IMR-90 (cell line): ENCODE measurements at regions of chr1 and their contacts with region 1.

Region 1: DNA sequence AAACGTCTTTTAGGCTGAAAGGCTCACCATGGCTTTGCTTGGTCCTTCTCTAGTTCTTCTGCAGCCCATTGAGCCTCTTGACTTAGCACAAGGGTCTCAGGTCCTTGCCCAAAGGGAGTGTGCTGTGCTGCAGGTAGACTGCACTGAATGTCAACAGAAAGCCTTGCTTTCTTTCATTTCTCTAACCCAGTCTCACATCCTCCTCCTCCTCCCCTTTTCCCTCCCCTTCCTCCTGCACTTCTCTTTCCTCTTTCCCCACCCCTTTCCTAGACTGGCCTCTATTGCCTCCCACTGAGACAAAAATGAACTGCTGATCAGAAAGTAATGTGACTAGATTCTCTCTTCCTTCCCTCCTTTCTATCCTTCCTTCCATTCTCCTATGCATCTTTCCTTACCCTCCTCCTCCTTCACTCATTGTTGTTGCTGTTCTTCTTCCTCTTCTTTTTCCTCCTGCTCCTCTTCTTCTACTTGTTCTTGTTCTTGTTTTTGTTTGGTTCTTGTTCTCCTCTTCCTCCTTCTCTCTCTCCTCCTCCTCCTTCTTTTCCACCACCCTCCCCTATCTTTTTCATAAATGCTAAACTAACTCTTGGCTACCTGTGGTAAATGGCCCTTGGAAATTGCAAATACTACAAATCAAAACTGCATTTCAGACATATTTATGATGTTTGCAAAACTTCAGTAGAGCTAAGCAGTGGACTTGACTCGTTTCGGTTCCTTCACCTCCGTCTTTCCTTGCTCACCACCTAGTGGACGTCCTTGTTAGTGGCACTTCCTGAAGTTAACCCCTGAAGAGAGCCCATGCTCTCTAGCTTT is at the start of gene SELL:
- DNase-seq: peak; percentile 68
- ATAC-seq: peak; percentile 100
- H3K4me3 ChIP-seq: peak within 1 kb of the TSS; percentile 27; the same call in 1 of the 2 replicates
- H3K27ac ChIP-seq: no peak within 1 kb of the TSS
- H3K4me1 ChIP-seq: no peaks in the 10 kb centered on the region
- H3K27me3 ChIP-seq: no peaks in the 10 kb centered on the region; the same call in 1 of the 2 replicates
- CTCF ChIP-seq: peak; percentile 71
- POLR2A ChIP-seq: no peak
- RAD21 ChIP-seq: peak; percentile 63
- total RNA-seq, gene SELL: not detected in 2 replicates

Region 2: DNA sequence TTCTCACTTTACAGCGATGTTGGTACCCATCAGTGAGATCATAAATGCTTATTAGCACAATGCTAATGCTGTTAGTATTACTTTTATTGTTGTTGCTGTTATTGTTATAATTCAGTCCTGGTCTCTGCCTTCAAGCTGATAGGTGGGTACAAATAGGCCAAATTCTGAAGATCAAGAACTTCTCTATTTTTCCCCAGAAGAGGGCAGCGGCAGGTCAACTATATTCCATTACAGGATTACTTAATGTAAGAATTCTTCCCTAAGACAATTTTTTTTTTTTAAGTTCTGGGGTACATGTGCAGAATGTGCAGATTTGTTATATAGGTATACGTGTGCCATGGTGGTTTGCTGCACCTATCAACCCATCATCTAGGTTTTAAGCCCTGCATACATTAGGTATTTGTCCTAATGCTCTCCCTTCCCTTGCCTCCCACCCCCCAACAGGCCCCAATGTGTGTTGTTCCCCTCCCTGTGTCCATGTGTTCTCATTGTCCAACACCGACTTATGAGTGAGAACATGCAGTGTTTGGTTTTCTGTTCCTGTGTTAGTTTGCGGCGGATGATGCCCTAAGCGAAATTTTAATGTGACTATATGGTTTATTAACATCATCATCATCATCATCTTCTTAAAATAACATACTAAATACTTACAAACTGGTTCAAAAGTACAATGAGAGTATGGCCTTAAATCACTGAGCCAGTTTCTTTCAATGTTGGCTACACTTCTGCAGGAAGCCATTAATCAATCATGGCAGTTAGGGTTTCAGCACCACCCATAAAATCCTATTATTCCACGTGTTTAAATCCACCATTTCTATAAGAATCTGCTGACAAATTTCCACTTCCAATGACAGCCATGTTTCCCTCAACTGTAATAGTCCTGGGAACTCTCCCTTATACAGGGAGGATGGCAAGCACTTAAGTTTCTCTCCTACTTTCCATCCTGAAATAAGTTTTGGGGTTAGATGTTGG is 245.1 kb before region 1 on chr1:
- CTCF ChIA-PET with region 1: interaction called, 3 read pairs
- POLR2A ChIA-PET with region 1: no interaction called
- dilution Hi-C with region 1: no loop called
- in situ Hi-C with region 1: no loop called
- intact Hi-C with region 1: loop called (anchors 5 kb)
- DNase-seq: peak; percentile 52
- ATAC-seq: peak; percentile 66
- H3K4me3 ChIP-seq: no peak overlapping the region
- H3K27ac ChIP-seq: no peak overlapping the region
- H3K4me1 ChIP-seq: no peaks in the 10 kb centered on the region
- H3K27me3 ChIP-seq: no peaks in the 10 kb centered on the region
- CTCF ChIP-seq: peak; percentile 50
- POLR2A ChIP-seq: no peak
- RAD21 ChIP-seq: peak; percentile 54

Region 3: DNA sequence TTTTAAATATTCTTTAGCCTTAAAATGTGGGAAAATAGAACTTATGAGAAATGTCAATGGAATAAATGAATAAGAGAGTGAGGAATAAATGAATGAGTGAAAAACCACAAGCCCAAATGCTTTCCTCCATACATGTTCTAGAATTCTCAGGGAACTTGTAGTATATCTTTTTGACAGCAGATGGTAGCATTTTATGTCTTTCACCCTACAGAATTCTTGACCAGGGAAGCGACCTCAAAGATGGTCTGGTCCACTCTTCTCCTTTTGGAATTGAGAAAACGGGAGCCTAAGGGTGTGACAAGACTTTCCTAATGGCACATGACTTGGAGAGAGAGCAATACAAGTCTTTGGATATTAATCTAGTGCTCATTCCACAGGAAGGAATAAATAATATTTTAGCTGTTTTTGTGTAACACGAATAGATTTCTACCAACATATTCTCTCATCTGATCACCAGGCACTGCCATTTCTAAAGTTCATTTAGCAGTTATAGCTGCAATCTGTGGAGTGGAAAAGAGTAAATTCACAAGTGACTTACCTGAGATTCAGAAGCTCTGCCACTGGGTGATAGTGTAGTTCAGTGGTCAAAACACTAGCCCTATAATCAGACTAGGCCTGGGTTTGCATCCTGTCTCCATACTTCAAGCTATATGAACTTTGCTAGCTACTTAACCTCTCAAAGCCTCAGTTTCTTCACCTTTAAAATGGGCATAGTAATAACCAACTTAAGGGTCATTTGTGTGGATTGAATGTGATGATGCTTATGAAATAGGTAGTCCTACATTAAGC is 110.4 kb before region 1 on chr1:
- CTCF ChIA-PET with region 1: no interaction called
- POLR2A ChIA-PET with region 1: no interaction called
- dilution Hi-C with region 1: no loop called
- in situ Hi-C with region 1: no loop called
- intact Hi-C with region 1: loop called (anchors 1 kb)
- DNase-seq: peak; percentile 20
- ATAC-seq: peak; percentile 37; the same call in 1 of the 2 replicates
- H3K4me3 ChIP-seq: no peak overlapping the region
- H3K27ac ChIP-seq: no peak overlapping the region
- H3K4me1 ChIP-seq: no peaks in the 10 kb centered on the region
- H3K27me3 ChIP-seq: no peaks in the 10 kb centered on the region
- CTCF ChIP-seq: peak; percentile 35
- POLR2A ChIP-seq: no peak
- RAD21 ChIP-seq: peak; percentile 40

Region 4: GRCh38 chr1:169670836-169671235 is 40.8 kb before region 1 on chr1:
- CTCF ChIA-PET with region 1: no interaction called
- POLR2A ChIA-PET with region 1: no interaction called
- dilution Hi-C with region 1: no loop called
- in situ Hi-C with region 1: no loop called
- intact Hi-C with region 1: no loop called
- DNase-seq: no peak
- ATAC-seq: no peak
- H3K4me3 ChIP-seq: no peak overlapping the region
- H3K27ac ChIP-seq: no peak overlapping the region
- H3K4me1 ChIP-seq: no peaks in the 10 kb centered on the region
- H3K27me3 ChIP-seq: no peaks in the 10 kb centered on the region
- CTCF ChIP-seq: no peak
- POLR2A ChIP-seq: no peak
- RAD21 ChIP-seq: no peak

Region 5: DNA sequence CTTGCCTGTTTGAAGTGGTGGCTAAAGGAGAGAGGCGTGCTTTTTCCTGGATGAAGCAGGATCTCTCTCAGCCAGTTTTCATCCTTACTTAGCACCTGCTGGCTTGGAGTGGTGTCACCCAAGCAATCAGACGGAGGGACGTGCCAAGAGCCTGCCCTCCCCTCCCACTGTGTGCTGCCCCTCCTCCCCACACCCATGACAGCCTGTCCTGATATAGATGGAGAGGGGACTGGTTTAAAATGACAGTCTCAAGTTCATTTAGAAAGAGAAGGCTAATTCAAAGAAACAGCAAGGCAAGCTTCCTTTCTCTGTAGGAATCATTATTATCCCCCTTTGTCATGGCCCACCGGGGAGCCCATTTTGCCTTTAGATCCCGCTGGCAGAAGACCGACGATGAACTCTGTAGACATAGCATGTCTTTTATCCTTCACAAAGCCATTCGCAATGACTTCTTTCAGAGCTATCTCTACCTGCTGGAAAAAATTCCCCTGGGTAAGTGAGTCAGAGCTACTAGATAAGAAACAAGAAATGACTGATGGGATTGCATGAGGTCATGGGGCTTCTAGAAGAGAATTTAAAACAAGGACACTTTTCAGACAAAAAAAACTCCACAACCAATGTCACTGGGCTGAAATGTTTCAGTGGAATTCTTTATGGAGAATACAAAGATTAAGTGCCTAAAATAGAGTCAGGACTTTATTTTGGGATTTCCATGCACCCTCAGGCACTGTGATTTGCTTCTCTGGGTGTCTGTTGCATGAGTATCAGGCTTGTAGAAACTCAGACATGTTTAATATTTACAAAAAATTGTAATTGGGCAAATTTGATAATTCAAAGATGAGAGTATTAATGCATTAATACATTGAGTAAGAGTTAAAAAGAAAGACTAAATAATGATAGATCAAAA is 434.3 kb after region 1 on chr1 and contains the start of gene NTMT2:
- CTCF ChIA-PET with region 1: no interaction called
- POLR2A ChIA-PET with region 1: no interaction called
- dilution Hi-C with region 1: no loop called
- in situ Hi-C with region 1: no loop called
- intact Hi-C with region 1: no loop called
- DNase-seq: peak; percentile 8
- ATAC-seq: no peak
- H3K4me3 ChIP-seq: no peak within 1 kb of the TSS
- H3K27ac ChIP-seq: no peak within 1 kb of the TSS
- H3K4me1 ChIP-seq: no peaks in the 10 kb centered on the region
- H3K27me3 ChIP-seq: no peaks in the 10 kb centered on the region
- CTCF ChIP-seq: no peak
- POLR2A ChIP-seq: no peak
- RAD21 ChIP-seq: no peak
- total RNA-seq, gene NTMT2: not detected in 2 replicates